ENCODE measurements at regions of chr1 and their contacts with region 1.

Region 1: DNA sequence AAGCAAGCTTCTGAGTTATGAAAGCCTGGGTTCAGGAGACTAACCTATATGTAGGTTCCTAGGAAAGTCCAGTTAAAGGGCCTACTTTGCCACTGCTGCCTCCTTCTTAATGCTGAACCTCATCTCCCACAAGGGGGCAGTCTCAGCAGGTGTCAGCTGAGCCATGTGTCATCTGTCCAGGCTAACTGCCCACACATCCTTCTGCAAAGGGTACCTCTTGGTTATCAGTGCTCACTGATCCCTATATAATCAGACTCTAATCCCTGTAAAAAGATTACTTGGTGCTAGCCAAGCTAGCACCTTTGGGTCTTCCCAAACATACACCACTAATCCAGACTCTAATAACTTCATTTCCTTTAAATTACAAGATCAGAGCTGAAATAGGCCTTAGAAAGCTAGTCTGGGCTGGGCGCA is 9.0 kb downstream of the PRDX1 start:
- DNase-seq: peak; percentile 61
- ATAC-seq: peak; percentile 73
- H3K4me3 ChIP-seq: no peak overlapping the region
- H3K27ac ChIP-seq: no peak overlapping the region
- H3K4me1 ChIP-seq: no peaks in the 10 kb centered on the region
- H3K27me3 ChIP-seq: no peaks in the 10 kb centered on the region
- CTCF ChIP-seq: peak; percentile 63 to 83 (median 78); a peak in 5 of 6 replicates
- POLR2A ChIP-seq: no peak
- RAD21 ChIP-seq: peak; percentile 73

Region 2: GRCh38 chr1:44919400-44919799 is 593.2 kb before region 1 on chr1:
- CTCF ChIA-PET with region 1: no interaction called
- POLR2A ChIA-PET with region 1: no interaction called
- RAD21 ChIA-PET with region 1: no interaction called
- intact Hi-C with region 1: no loop called
- DNase-seq: no peak
- ATAC-seq: no peak
- H3K4me3 ChIP-seq: no peak overlapping the region
- H3K27ac ChIP-seq: no peak overlapping the region
- H3K4me1 ChIP-seq: no peaks in the 10 kb centered on the region
- H3K27me3 ChIP-seq: no peaks in the 10 kb centered on the region
- CTCF ChIP-seq: no peak
- POLR2A ChIP-seq: no peak
- RAD21 ChIP-seq: no peak

Region 3: DNA sequence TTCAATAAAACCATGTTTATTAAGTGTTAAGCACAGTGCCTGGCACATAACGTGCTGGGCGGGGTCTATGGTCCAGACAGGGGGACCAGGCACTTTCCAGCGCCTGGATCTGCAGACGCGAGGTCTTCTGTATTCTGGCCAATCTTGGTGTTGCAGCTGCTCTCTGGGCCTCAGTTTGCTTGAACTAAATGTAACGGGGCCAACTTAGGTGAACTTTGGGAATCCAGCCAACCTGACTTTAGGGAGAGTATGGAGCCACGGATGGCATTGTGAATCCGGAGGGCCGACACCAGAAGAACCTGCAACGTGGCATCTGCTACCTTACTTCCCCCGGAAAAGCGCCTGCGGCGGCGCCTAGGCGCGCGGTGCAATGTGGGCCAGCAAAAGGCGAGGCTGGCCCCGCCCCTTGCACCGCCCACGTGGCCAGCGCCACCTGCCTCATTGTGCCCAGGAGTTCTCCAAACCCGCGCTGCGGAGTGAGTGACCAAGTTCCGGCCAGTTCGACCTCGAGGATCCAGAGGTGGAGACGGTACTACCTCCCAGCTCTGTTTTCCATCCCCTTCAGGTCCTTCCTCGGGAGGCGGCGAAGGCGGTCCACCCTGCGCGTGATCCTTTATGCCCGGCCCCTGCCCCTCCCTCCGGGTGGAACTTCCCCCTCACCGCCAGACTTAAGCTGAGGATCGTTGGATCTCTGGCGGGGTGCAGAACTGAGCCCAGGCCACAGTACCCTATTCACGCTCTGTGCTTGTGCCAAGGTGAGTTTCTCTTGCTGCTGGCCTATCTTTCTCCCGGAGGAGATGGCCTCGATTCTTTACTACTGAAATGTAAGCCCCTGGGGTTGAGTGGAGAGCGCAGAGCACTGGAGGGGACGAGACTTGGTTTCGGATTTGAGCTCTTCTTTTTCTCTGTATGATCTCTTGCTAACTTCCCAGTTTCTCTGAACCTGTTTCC is 38.0 kb after region 1 on chr1 and contains the start of gene AKR1A1:
- CTCF ChIA-PET with region 1: no interaction called
- POLR2A ChIA-PET with region 1: no interaction called
- RAD21 ChIA-PET with region 1: no interaction called
- intact Hi-C with region 1: loop called (anchors 2 kb)
- DNase-seq: peak; percentile 78
- ATAC-seq: peak; percentile 93
- H3K4me3 ChIP-seq: peak within 1 kb of the TSS; percentile 89 to 96
- H3K27ac ChIP-seq: peak within 1 kb of the TSS; percentile 87
- H3K4me1 ChIP-seq: peaks cover 11 to 25% of the 10 kb centered on the region in 2 experiments; a peak in 3 of 4 replicates
- H3K27me3 ChIP-seq: no peaks in the 10 kb centered on the region
- CTCF ChIP-seq: no peak
- POLR2A ChIP-seq: peak; percentile 85
- RAD21 ChIP-seq: no peak
- total RNA-seq, gene AKR1A1: 199 TPM

Region 4: DNA sequence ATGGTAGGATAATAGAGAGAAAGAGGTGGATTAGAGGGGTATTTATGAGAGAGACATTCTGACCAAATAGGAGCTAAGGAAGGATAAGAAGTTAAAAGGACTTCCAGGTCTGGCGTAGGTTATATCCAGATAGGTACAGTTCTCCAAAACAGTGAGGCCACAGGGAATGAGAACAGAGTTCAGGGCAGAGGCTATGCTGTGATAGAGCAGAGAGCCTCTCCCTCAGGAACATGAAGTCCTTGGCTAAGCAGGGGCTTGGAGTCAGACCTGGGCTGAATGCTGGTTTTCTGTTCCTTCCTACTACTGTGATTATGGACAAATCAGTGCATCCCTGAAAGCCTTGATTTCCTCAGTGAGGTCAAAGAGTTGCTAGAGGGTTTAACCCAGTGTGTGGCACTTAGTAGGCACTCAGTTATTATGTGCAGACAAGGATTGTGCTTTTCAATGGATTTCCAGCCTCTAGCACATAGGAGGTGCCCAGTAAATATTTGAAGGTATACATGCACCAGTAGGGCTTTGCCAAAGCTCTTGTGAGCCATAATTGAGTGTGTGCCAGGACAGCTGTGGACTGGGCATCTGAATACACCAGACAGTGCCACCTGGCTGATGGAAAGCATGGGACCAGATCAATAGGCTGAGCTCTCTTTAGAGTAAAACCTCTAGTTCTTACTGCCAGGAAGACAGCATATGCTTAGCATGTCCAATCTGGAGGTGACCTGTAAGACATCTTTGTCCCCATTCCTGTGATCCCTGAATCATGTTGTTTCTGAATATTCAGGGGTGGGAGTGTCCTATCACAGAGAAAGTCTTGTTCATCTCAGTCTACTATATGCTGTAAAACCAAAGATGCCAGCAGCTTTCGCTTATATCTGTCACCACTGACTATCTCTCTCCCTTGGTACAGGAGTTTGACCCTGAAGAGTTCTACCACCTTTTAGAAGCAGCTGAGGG is 508.7 kb after region 1 on chr1:
- CTCF ChIA-PET with region 1: no interaction called
- POLR2A ChIA-PET with region 1: no interaction called
- RAD21 ChIA-PET with region 1: no interaction called
- intact Hi-C with region 1: no loop called
- DNase-seq: no peak
- ATAC-seq: no peak
- H3K4me3 ChIP-seq: no peak overlapping the region
- H3K27ac ChIP-seq: no peak overlapping the region
- H3K4me1 ChIP-seq: no peaks in the 10 kb centered on the region
- H3K27me3 ChIP-seq: no peaks in the 10 kb centered on the region
- CTCF ChIP-seq: 0 out of 6 replicates have a peak, but pooled peaks of 1 of the 3 experiments have one; percentile 7
- POLR2A ChIP-seq: no peak
- RAD21 ChIP-seq: peak; percentile 48; the same call in 1 of the 2 replicates

Measured in HCT116 (cell line).